Heart right ventricle (tissue), 16 donors: ENCODE measurements at regions of chr1 and their contacts with region 1.

Region 1: GRCh38 chr1:21956720-21957552 is 19.8 kb upstream of the HSPG2 start:
- DNase-seq: peak; percentile 64 to 74
- ATAC-seq: peak; percentile 54 to 92 (median 79)
- H3K4me3 ChIP-seq: no peak overlapping the region
- H3K27ac ChIP-seq: peak overlapping the region in 9 of 10 donors; percentile 60 to 91 (median 82)
- H3K4me1 ChIP-seq: peaks cover 19 to 61% (median 37%) of the 10 kb centered on the region in 9 donors
- H3K27me3 ChIP-seq: no peaks in the 10 kb centered on the region
- CTCF ChIP-seq: no peak

Region 2: DNA sequence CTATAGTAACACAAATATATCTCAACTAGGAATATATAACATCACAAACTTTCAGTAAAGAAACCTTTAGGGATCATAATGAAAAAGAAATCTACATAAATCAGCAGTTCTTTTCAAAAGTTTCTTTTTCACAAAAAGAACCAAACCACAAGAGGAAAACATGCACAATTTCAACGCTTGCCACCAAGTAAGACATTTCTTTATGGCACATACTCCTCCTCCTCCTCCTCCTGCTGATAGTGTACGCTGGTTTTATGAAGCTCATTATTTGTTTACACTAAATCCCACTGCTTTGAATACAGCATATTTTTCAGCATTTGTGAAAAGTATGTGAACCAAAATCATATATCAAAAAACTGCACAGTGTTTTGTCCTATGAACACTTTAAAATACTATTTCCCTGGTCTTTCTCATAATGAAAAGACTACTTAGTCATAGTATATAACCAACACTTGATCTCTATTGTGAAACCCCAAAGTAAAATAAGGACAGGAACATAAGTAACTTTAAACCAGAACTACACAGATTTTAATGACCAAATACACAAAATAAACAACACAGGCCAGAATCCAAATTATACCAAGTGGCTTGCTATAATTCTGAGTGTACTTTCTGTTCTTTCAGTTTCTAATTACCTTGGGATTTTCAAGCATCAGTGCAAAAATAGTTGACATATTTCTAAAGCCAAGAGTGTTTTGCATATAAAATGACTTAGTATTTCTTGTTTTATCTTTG is 964.4 kb before region 1 on chr1:
- intact Hi-C with region 1: no loop called
- DNase-seq: no peak
- ATAC-seq: no peak
- H3K4me3 ChIP-seq: no peak overlapping the region
- H3K27ac ChIP-seq: peak overlapping the region in 1 of 10 donors; percentile 13
- H3K4me1 ChIP-seq: peaks cover 0 to 24% (median 10%) of the 10 kb centered on the region in 9 donors
- H3K27me3 ChIP-seq: no peaks in the 10 kb centered on the region
- CTCF ChIP-seq: no peak

Region 3: DNA sequence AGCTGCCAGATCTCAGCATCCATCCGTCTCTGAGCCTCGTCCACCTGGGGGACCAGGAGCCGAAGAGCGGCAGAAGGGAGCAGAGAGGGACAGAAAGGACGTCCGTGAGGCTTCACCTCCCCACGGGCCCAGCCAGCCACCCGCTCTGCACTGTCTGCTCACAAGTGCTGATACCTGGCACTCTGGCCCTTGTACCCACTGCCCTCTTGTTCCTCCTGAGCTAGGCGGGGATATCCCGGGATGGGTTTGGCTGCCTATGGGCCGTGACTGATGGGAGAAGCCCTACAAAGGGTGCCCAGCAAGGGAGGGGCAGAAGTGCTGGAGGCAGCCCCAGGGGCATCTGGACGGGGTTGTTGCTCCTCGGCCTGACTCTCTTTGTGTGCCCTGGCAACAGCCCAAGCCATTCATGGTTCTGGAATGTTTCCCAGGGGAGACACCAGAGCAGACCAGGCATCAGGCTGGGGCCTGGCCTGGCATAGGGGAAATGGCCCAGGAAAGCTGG is 87.3 kb before region 1 on chr1:
- intact Hi-C with region 1: loop called in 6 of 10 experiments (anchors 5 to 10 kb)
- DNase-seq: peak; percentile 70 to 82
- ATAC-seq: peak; percentile 57 to 88 (median 80)
- H3K4me3 ChIP-seq: no peak overlapping the region
- H3K27ac ChIP-seq: peak overlapping the region in 8 of 10 donors; percentile 7 to 69 (median 55)
- H3K4me1 ChIP-seq: peaks cover 6 to 44% (median 14%) of the 10 kb centered on the region in 9 donors
- H3K27me3 ChIP-seq: no peaks in the 10 kb centered on the region
- CTCF ChIP-seq: no peak

Region 4: DNA sequence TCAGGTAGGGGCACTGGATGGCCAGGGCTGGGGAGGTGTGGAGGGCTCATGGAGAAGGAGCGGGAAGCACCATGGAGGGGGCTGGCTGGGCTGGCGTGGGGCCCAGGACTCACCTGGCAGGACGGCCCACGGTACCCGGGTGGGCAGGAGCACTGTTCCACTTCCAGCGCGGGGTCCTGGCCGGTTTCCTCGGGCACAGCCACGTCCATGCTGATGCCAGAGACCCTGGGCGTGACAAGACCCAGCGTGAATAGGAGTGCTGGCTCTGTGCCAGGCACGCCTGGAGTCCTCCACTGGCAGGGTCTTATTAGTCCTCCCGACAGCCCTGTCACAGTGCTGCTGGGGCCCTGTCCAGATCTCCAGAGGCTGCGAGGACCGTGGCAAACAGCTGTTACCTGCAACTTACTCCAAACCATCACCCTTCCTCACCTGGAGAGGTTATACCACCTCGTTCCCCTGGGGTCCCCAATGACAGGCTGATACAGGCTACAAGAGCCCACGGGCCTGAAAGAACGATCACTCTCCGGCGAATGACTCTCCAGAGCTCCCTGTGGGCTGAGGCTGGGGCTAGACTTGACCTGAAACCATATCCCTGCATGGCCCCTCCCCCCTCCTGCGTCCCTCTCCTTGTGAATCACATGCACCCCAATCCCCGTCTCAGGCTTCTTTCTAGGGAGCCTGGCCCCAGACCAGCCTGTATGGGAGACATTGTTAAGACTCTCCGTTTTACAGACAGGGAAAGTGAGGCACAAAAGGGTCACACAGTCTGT is 82.0 kb before region 1 on chr1:
- intact Hi-C with region 1: loop called in 4 of 10 experiments (anchors 5 to 10 kb)
- DNase-seq: no peak
- ATAC-seq: no peak
- H3K4me3 ChIP-seq: no peak overlapping the region
- H3K27ac ChIP-seq: peak overlapping the region in 3 of 10 donors; percentile 7 to 51 (median 9)
- H3K4me1 ChIP-seq: peaks cover 4 to 38% (median 9%) of the 10 kb centered on the region in 9 donors
- H3K27me3 ChIP-seq: no peaks in the 10 kb centered on the region
- CTCF ChIP-seq: no peak

Region 5: GRCh38 chr1:21882669-21883415 is 74.1 kb before region 1 on chr1:
- intact Hi-C with region 1: loop called in 3 of 10 experiments (anchors 5 to 10 kb)
- DNase-seq: no peak
- ATAC-seq: peak in 1 of 8 donors; percentile 4
- H3K4me3 ChIP-seq: no peak overlapping the region
- H3K27ac ChIP-seq: peak overlapping the region in 1 of 10 donors; percentile 10
- H3K4me1 ChIP-seq: peaks cover 0 to 9% (median 0%) of the 10 kb centered on the region in 9 donors
- H3K27me3 ChIP-seq: no peaks in the 10 kb centered on the region
- CTCF ChIP-seq: no peak

Region 6: GRCh38 chr1:21896652-21897532 is 60.0 kb before region 1 on chr1:
- intact Hi-C with region 1: loop called in 5 of 10 experiments (anchors 5 kb)
- DNase-seq: peak; percentile 81 to 86
- ATAC-seq: peak; percentile 63 to 86 (median 76)
- H3K4me3 ChIP-seq: no peak overlapping the region
- H3K27ac ChIP-seq: peak overlapping the region; percentile 75 to 99 (median 91)
- H3K4me1 ChIP-seq: peaks cover 55 to 98% (median 90%) of the 10 kb centered on the region in 9 donors
- H3K27me3 ChIP-seq: no peaks in the 10 kb centered on the region
- CTCF ChIP-seq: no peak

Region 7: GRCh38 chr1:21909787-21910503 is 47.0 kb before region 1 on chr1:
- intact Hi-C with region 1: loop called in 1 of 10 experiments (anchors 5 kb)
- DNase-seq: peak; percentile 75 to 88
- ATAC-seq: peak; percentile 41 to 75 (median 60)
- H3K4me3 ChIP-seq: peak overlapping the region in 3 of 10 donors; percentile 0 to 10 (median 5)
- H3K27ac ChIP-seq: peak overlapping the region; percentile 84 to 99 (median 92)
- H3K4me1 ChIP-seq: peaks cover 88 to 100% (median 98%) of the 10 kb centered on the region in 9 donors
- H3K27me3 ChIP-seq: no peaks in the 10 kb centered on the region
- CTCF ChIP-seq: no peak